Dorsolateral prefrontal cortex (tissue), 120 donors: ENCODE measurements at regions of chr20 and their contacts with region 1.

Region 1: GRCh38 chr20:62926239-62927104 is at the start of gene DIDO1:
- DNase-seq: peak; percentile 75 to 94 (median 88)
- H3K4me3 ChIP-seq: peak within 1 kb of the TSS; percentile 69 to 98 (median 94)
- H3K27ac ChIP-seq: peak within 1 kb of the TSS; percentile 80 to 99 (median 96)
- H3K27me3 ChIP-seq: no peaks in the 10 kb centered on the region
- CTCF ChIP-seq: peak; percentile 54 to 94 (median 76)
- total RNA-seq, gene DIDO1: 37.4 to 68.3 (median 49.5) TPM

Region 2: DNA sequence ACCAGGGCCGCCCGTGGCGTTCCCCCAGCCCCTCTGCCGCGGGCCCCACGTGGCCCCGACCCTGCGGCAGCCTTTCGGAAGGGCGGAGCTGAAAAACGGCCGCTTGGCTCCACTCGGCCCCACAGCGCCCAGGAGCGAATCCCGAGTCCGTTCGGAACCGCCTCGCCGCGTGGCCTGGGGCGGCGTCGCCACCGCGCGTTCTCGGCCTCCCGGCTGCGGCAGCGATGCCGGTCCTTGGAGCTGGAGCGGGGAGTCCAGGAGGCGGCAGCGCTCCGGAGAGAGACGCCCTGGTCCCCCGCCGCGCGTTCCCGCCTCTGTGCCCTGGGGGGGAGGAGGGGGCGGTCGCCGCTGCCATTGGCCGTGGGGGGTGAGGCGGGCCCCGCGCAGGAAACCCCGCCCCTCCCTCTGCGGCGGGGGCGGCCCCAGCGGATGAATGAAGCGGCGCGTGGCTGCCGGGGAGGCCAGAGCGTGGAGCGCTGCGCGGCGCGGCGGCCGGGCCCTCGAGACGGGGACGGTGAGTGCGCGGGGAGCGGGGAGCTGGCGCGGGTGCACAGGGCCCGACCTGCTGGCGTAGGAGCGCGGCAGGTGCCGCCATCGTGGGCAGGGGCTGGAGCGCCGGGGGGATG is 284.3 kb before region 1 on chr20 and contains the start of gene SLCO4A1:
- intact Hi-C with region 1: no loop called
- DNase-seq: peak in 9 of 10 donors; percentile 39 to 82 (median 70)
- H3K4me3 ChIP-seq: peak within 1 kb of the TSS; percentile 25 to 75 (median 65)
- H3K27ac ChIP-seq: peak within 1 kb of the TSS in 57 of 59 donors; percentile 10 to 86 (median 73)
- H3K27me3 ChIP-seq: peaks cover 0 to 45% (median 5%) of the 10 kb centered on the region in 45 donors
- CTCF ChIP-seq: peak in 8 of 56 donors; percentile 5 to 23 (median 18)
- total RNA-seq, gene SLCO4A1: 10.4 to 115 (median 38.3) TPM

Region 3: DNA sequence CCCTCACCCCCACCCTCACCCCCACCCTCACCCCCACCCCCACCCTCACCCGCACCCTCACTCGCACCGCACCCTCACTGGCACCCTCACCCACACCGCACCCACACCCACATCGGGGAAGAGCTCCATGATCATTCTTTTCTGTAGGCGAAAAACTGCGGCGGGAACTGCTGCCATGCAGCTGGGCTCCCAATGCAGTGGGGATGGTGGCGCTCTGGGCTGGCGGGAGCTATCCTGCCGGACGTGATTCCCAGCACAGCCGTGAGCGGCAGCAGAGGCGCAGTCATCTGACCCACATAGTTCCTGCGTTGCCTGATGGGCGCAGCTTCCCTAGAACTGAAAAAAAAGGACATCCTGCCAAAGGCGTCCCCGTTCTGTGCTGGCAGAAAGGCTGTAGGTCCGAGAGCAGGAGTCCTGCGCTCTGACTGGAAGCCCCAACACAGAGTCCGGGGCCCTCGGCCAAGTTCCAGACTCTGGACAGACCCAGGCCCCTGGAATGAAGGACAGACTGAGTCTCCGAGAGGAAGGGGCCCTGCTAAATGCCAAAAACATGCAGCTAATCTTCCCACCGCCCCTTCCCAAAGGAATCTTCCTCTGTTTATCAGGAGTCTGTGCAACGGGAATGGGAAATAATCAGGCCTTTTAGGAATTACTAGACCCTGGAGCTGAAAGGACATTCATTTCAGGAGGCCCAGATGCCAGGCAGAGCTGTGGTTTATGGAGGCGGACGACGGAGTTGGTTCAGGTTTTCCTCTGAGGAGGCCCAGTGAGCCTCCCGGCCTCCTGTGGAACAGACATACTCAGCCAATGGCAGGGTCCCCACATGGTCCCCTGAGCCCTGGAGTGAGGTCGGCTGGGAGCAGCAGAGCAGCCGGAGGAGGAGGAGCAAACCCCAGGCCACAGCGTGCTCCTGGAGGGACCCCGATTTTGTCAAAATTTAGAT is 50.8 kb before region 1 on chr20:
- intact Hi-C with region 1: loop called in 1 of 2 experiments (anchors 5 kb)
- DNase-seq: peak; percentile 69 to 91 (median 85)
- H3K4me3 ChIP-seq: peak overlapping the region in 52 of 59 donors; percentile 7 to 57 (median 38)
- H3K27ac ChIP-seq: peak overlapping the region; percentile 48 to 98 (median 87)
- H3K27me3 ChIP-seq: no peaks in the 10 kb centered on the region
- CTCF ChIP-seq: peak in 54 of 56 donors; percentile 14 to 68 (median 52)

Region 4: DNA sequence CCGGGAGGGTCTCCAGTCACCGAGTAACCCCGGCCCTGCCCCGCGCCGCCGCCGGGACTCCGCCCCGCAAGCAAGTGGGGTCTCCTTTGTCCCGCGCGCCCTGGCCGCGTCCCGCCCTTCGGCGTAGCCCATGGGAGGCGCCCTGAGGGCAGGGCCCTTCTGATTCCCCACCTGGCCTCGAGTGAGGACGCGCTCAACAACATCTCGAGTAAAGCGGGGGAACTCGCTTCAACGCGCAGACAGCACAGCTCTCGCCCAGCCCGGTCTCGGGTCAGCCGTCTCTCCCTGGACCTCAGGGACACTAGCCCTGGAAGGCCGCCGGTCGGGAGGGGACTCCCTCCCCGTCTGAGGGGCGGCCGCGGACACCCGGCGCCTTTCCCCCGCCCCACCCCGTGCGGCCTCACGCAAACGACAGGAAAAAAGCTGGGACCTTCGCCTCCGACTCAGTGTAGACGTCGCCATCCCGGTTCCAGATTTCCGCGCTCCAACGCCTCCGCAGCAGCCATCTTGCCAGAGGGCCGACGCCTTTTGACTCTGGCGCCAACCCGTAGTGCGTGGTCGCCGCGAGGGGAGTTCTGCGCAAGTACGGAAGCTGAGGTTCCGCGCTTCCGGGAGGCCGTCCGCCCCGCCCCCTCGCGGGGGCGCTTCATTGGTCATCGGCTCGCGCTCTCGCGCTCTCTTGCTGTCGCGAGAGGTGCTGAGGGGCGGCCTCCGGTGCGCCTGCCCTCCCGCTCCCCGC is 11.1 kb after region 1 on chr20:
- intact Hi-C with region 1: loop called in 1 of 2 experiments (anchors 1 kb)
- DNase-seq: peak; percentile 80 to 95 (median 91)
- H3K4me3 ChIP-seq: peak overlapping the region; percentile 58 to 100 (median 94)
- H3K27ac ChIP-seq: peak overlapping the region; percentile 23 to 97 (median 89)
- H3K27me3 ChIP-seq: no peaks in the 10 kb centered on the region
- CTCF ChIP-seq: peak in 47 of 56 donors; percentile 8 to 69 (median 39)